ENCODE measurements at regions of chr5 and their contacts with region 1.

Region 1: DNA sequence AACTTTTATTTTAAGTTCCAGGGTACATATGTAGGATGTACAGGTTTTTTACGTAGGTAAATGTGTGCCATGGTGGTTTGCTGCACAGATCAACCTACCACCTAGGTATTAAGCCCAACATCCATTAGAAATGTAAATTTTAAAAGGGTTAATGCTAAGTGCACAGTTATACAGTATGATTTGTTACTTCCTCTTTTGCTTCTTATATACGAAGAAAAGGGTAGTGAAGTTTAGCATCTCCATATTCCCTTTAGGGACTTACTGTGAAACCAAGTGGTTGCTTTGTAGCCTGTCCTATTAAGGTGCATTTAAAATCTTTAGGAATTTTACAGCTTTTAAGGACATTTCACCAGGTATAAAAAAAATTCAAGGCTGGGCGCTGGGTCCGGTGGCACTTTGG is 46.4 kb downstream of the RBM27 start:
- DNase-seq: peak; percentile 47
- ATAC-seq: peak; percentile 78
- H3K4me3 ChIP-seq: no peak overlapping the region
- H3K4me3 Mint-ChIP-seq: no peak overlapping the region
- H3K27ac ChIP-seq: no peak overlapping the region
- H3K27ac Mint-ChIP-seq: peak overlapping the region; percentile 56
- H3K4me1 ChIP-seq: peaks cover 0 to 10% of the 10 kb centered on the region in 2 donors
- H3K4me1 Mint-ChIP-seq: peaks cover 6% of the 10 kb centered on the region
- H3K27me3 ChIP-seq: no peaks in the 10 kb centered on the region
- H3K27me3 Mint-ChIP-seq: no peaks in the 10 kb centered on the region
- CTCF ChIP-seq: no peak

Region 2: GRCh38 chr5:146151970-146152369 is 97.8 kb before region 1 on chr5:
- CTCF ChIA-PET with region 1: no interaction called
- POLR2A ChIA-PET with region 1: no interaction called
- intact Hi-C with region 1: loop called (anchors 10 kb)
- DNase-seq: no peak
- ATAC-seq: no peak
- H3K4me3 ChIP-seq: no peak overlapping the region
- H3K4me3 Mint-ChIP-seq: no peak overlapping the region
- H3K27ac ChIP-seq: no peak overlapping the region
- H3K27ac Mint-ChIP-seq: no peak overlapping the region
- H3K4me1 ChIP-seq: no peaks in the 10 kb centered on the region
- H3K4me1 Mint-ChIP-seq: no peaks in the 10 kb centered on the region
- H3K27me3 ChIP-seq: no peaks in the 10 kb centered on the region
- H3K27me3 Mint-ChIP-seq: no peaks in the 10 kb centered on the region
- CTCF ChIP-seq: no peak

Region 3: GRCh38 chr5:146284016-146284415 is 34.2 kb after region 1 on chr5:
- CTCF ChIA-PET with region 1: no interaction called
- POLR2A ChIA-PET with region 1: no interaction called
- intact Hi-C with region 1: loop called (anchors 2 kb)
- DNase-seq: no peak
- ATAC-seq: no peak
- H3K4me3 ChIP-seq: no peak overlapping the region
- H3K4me3 Mint-ChIP-seq: no peak overlapping the region
- H3K27ac ChIP-seq: no peak overlapping the region
- H3K27ac Mint-ChIP-seq: no peak overlapping the region
- H3K4me1 ChIP-seq: no peaks in the 10 kb centered on the region
- H3K4me1 Mint-ChIP-seq: no peaks in the 10 kb centered on the region
- H3K27me3 ChIP-seq: no peaks in the 10 kb centered on the region
- H3K27me3 Mint-ChIP-seq: no peaks in the 10 kb centered on the region
- CTCF ChIP-seq: no peak

Measured in B cell (primary cell).